GM23248 (cell line): ENCODE measurements at regions of chr20 and their contacts with region 1.

Region 1: GRCh38 chr20:2523919-2524708 is 12.3 kb upstream of the TMC2 start:
- DNase-seq: peak; percentile 86
- H3K4me3 ChIP-seq: peak overlapping the region; percentile 89
- H3K27ac ChIP-seq: peak overlapping the region; percentile 58
- H3K4me1 ChIP-seq: peaks cover 6% of the 10 kb centered on the region; the same call in 1 of the 2 replicates
- H3K27me3 ChIP-seq: no peaks in the 10 kb centered on the region

Region 2: GRCh38 chr20:2261105-2261504 is 263.0 kb before region 1 on chr20:
- in situ Hi-C with region 1: no loop called
- DNase-seq: peak; percentile 23
- H3K4me3 ChIP-seq: no peak overlapping the region
- H3K27ac ChIP-seq: no peak overlapping the region
- H3K4me1 ChIP-seq: no peaks in the 10 kb centered on the region
- H3K27me3 ChIP-seq: no peaks in the 10 kb centered on the region

Region 3: DNA sequence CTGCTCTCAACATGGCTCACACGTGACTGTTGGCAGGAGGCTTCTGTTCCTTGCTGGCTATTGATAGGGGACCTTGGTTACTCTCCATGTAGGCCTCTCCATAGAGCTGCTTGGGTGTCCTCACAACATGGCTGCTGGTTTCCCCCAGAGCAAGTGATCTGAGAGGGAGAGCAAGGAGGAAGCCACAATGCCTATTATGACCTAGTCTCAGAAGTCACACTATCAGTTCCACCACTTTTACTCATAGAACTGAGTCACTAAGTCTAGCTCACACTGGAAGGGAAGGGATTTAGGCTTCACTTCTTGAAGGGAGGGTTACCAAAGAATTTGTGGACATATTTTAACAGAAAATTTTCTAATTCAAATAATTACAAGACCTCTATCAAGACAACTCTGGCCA is 119.6 kb after region 1 on chr20:
- in situ Hi-C with region 1: loop called (anchors 10 kb)
- DNase-seq: no peak
- H3K4me3 ChIP-seq: no peak overlapping the region
- H3K27ac ChIP-seq: no peak overlapping the region
- H3K4me1 ChIP-seq: no peaks in the 10 kb centered on the region
- H3K27me3 ChIP-seq: no peaks in the 10 kb centered on the region

Region 4: DNA sequence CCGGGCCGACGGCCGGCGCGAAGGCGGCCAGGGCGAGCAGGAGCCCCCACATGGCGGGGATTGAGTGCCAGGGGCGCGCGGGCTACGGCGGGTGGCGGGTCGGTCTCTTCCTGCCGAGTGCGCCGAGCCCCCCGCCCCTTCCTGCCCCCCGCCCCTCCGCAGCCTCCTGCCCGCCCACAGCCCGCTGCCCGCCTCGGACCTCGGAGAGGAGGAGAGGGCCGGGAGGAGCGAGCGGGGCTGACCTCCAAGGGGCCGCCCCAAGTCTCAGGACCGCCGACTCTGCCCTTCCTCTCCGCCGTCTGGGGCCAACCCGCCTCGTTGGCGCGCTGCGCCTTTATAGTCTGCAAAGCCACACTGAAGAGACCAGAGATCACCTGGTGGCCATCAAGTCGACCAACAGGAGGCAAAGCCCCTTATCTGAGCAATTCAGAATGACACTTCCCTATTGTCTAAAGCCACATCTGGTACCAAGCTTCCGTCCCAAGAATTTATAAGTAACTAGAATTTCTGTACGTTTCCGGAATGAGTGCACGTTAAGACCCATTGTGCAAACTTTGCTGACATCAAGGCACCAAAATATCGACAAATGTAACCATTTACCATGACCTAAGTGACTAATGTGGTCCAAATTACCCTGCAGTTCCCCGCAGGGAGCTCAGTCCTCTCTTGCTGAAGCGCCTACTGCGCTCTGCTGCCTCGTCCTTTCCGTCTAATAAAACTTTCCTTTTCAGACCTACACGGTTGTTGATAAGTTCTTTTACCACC is 276.6 kb after region 1 on chr20 and contains the start of gene CPXM1:
- in situ Hi-C with region 1: no loop called
- DNase-seq: no peak
- H3K4me3 ChIP-seq: peak within 1 kb of the TSS; percentile 35; the same call in 1 of the 2 replicates
- H3K27ac ChIP-seq: no peak within 1 kb of the TSS
- H3K4me1 ChIP-seq: no peaks in the 10 kb centered on the region
- H3K27me3 ChIP-seq: peaks cover 62% of the 10 kb centered on the region
- total RNA-seq, gene CPXM1: not detected in 2 replicates